Heart left ventricle (tissue), 16 donors: ENCODE measurements at regions of chr9 and their contacts with region 1.

Region 1: GRCh38 chr9:7415836-7416235 is 383.7 kb downstream of the DMAC1 start:
- DNase-seq: no peak
- ATAC-seq: no peak
- H3K4me3 ChIP-seq: no peak overlapping the region
- H3K27ac ChIP-seq: no peak overlapping the region
- H3K4me1 ChIP-seq: no peaks in the 10 kb centered on the region
- H3K27me3 ChIP-seq: no peaks in the 10 kb centered on the region
- CTCF ChIP-seq: no peak
- POLR2A ChIP-seq: no peak

Region 2: DNA sequence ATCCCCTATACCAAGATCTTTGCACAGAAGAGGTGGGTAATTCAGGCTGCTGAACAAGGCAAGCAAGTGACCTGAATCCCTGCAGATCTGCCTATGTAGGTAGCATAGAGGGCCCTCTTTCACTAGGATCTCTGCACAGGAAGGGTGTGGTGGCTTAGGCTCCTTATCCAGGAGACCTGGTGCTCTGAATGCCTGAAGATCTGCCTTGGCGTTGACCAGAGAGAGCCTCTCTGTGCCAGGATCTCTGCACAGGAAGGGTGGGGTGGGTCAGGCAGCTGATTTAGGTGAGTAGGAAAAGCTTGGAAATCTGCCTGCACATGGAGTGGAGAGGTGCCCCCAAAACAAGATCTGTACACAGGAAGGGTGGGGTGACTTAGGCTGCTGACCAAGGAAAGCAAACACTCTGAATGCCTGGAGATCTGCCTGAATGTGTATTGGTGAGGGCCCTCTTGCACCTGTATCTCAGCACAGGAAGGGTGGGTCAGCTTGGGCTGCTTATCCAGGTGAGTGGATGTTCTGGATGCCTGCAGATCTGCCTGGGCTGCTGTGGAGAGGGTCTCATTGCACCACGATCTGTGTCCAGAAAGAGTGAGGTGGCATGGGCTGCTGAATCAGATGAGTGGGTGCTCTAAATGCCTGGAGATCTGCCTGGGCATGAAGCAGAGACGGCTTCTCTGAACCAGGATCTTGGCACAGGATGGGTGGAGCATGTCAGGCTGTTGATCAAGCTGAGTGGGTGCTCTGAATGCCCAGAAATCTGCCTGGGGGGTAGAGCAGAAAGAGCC is 17.9 kb after region 1 on chr9:
- intact Hi-C with region 1: loop called in 1 of 10 experiments (anchors 1 kb)
- DNase-seq: no peak
- ATAC-seq: no peak
- H3K4me3 ChIP-seq: no peak overlapping the region
- H3K27ac ChIP-seq: no peak overlapping the region
- H3K4me1 ChIP-seq: no peaks in the 10 kb centered on the region
- H3K27me3 ChIP-seq: no peaks in the 10 kb centered on the region
- CTCF ChIP-seq: no peak
- POLR2A ChIP-seq: no peak